ENCODE measurements at regions of chr1 and their contacts with region 1.

Region 1: DNA sequence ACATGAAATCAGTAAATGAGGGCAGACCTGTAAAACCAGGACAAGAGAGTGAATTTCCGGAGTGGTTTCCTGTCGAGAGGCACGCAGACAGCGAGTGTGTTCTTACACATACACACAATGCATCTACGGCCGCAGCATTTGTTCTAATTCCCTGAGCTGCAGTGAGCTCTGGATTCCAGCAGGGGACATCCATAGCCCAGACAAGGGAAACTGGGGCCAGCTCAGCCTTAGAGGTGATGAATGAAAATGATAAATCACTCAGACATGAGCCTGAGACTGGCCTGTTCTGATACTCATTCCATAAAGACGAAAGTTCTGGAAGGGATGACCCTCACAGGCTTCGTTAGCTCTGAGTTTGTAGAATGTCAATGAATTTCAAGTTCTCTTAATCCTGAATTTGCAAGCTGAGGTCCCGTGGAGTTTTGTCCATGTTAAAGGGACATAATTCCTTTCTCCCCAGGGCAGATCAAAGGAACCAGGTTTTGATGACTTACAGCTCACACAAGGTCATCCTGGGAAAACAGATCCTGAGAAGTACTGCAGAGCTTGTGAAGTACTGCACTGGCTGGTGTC is 207.9 kb upstream of the C1orf87 start:
- DNase-seq: peak; percentile 49 to 95 (median 68)

Region 2: DNA sequence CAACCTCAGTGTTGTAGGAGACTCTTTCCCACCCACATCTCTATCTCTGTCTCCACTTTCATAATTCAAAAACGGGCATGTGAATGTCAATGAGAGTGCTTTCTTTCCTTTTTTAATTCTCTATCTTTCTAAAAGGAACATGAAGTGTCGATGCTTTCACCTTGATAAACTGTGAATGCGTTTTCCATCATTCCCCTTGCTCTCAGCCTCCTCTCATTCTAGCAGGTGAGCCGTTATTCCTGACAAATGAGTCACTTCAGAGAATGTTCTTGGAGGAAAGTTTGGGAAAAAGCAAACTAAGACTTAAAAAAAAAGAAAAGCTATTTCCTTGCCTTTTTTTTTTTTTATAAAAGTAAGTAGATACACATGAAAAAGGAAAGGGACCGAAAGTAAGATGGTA is 18.1 kb after region 1 on chr1:
- intact Hi-C with region 1: no loop called
- DNase-seq: no peak

Region 3: GRCh38 chr1:60762176-60762575 is 480.7 kb after region 1 on chr1:
- intact Hi-C with region 1: loop called (anchors 5 kb)
- DNase-seq: no peak

Region 4: GRCh38 chr1:61043010-61043820 is 761.8 kb after region 1 on chr1:
- intact Hi-C with region 1: loop called (anchors 5 kb)
- DNase-seq: peak; percentile 63 to 97 (median 87)

Measured in posterior cingulate gyrus (tissue), 11 donors.